B cell (primary cell): ENCODE measurements at regions of chr2 and their contacts with region 1.

Region 1: GRCh38 chr2:164703915-164704706 is 82.8 kb upstream of the GRB14 start:
- DNase-seq: no peak
- ATAC-seq: no peak
- H3K4me3 ChIP-seq: no peak overlapping the region
- H3K4me3 Mint-ChIP-seq: no peak overlapping the region
- H3K27ac ChIP-seq: no peak overlapping the region
- H3K27ac Mint-ChIP-seq: no peak overlapping the region
- H3K4me1 ChIP-seq: no peaks in the 10 kb centered on the region
- H3K4me1 Mint-ChIP-seq: no peaks in the 10 kb centered on the region
- H3K27me3 ChIP-seq: no peaks in the 10 kb centered on the region
- H3K27me3 Mint-ChIP-seq: no peaks in the 10 kb centered on the region
- CTCF ChIP-seq: no peak

Region 2: DNA sequence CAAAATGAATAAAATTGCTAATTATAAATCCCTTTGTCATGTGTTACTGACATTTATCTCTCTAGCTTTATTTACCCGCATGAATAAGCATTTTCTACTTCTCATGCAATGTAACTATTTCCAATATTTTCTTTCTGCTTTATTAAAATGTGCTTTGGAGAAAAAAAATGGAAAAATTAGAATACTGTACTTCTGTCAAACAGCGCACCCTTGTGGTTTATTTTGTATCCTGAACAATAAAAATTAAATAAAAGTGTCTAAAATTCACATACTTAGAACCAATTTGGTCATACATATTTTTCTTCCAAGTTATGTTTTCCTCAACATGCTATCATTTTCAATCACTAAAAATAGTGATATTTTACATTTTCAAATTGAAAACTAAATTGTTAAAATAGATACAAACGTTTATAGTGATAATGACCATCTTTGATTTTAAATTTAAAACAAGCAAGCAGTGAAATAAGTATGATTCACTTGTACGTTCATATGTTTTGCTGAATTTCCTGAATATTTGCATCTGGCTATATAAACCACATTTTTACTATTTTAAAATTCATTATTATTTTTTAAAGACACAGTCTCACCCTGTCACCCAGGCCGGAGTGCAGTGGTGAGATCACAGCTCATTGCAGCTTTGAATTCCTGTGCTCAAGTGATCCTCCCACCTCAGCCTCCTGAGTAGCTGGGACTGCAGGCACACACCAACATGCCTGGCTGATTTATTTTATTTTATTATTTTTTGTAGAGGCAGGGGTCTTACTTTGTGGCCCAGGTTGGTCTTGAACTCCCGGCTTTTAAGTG is 13.1 kb after region 1 on chr2:
- CTCF ChIA-PET with region 1: interaction called, 9 read pairs
- POLR2A ChIA-PET with region 1: no interaction called
- intact Hi-C with region 1: loop called (anchors 2 kb)
- DNase-seq: peak; percentile 32
- ATAC-seq: no peak
- H3K4me3 ChIP-seq: no peak overlapping the region
- H3K4me3 Mint-ChIP-seq: no peak overlapping the region
- H3K27ac ChIP-seq: no peak overlapping the region
- H3K27ac Mint-ChIP-seq: no peak overlapping the region
- H3K4me1 ChIP-seq: no peaks in the 10 kb centered on the region
- H3K4me1 Mint-ChIP-seq: peaks cover 6% of the 10 kb centered on the region
- H3K27me3 ChIP-seq: no peaks in the 10 kb centered on the region
- H3K27me3 Mint-ChIP-seq: no peaks in the 10 kb centered on the region
- CTCF ChIP-seq: peak; percentile 87